Heart left ventricle (tissue), 16 donors: ENCODE measurements at regions of chr21 and their contacts with region 1.

Region 1: GRCh38 chr21:40841524-40842202 is 5.3 kb downstream of the DSCAM start:
- DNase-seq: peak in 4 of 5 donors; percentile 29 to 65 (median 43)
- ATAC-seq: peak in 3 of 4 donors; percentile 86 to 89 (median 88)
- H3K4me3 ChIP-seq: peak overlapping the region in 8 of 12 donors; percentile 18 to 34 (median 24)
- H3K27ac ChIP-seq: no peak overlapping the region
- H3K4me1 ChIP-seq: peaks cover 0 to 12% (median 0%) of the 10 kb centered on the region in 12 donors
- H3K27me3 ChIP-seq: peaks cover 4 to 84% (median 32%) of the 10 kb centered on the region in 9 donors
- CTCF ChIP-seq: peak in 11 of 12 donors; percentile 17 to 55 (median 31)
- POLR2A ChIP-seq: no peak

Region 2: GRCh38 chr21:40466893-40467501 is 374.7 kb before region 1 on chr21:
- intact Hi-C with region 1: loop called in 4 of 10 experiments (anchors 2 to 5 kb)
- DNase-seq: no peak
- ATAC-seq: no peak
- H3K4me3 ChIP-seq: no peak overlapping the region
- H3K27ac ChIP-seq: no peak overlapping the region
- H3K4me1 ChIP-seq: no peaks in the 10 kb centered on the region
- H3K27me3 ChIP-seq: peaks cover 0 to 12% (median 0%) of the 10 kb centered on the region in 9 donors
- CTCF ChIP-seq: peak in 11 of 12 donors; percentile 20 to 53 (median 42)
- POLR2A ChIP-seq: no peak

Region 3: GRCh38 chr21:40658316-40658715 is 183.3 kb before region 1 on chr21:
- intact Hi-C with region 1: no loop called
- DNase-seq: no peak
- ATAC-seq: no peak
- H3K4me3 ChIP-seq: no peak overlapping the region
- H3K27ac ChIP-seq: no peak overlapping the region
- H3K4me1 ChIP-seq: no peaks in the 10 kb centered on the region
- H3K27me3 ChIP-seq: peaks cover 0 to 4% (median 0%) of the 10 kb centered on the region in 9 donors
- CTCF ChIP-seq: no peak
- POLR2A ChIP-seq: no peak

Region 4: GRCh38 chr21:41045534-41046268 is 204.0 kb after region 1 on chr21:
- intact Hi-C with region 1: loop called in 1 of 10 experiments (anchors 10 kb)
- DNase-seq: no peak
- ATAC-seq: peak in 3 of 4 donors; percentile 20 to 56 (median 41)
- H3K4me3 ChIP-seq: no peak overlapping the region
- H3K27ac ChIP-seq: no peak overlapping the region
- H3K4me1 ChIP-seq: no peaks in the 10 kb centered on the region
- H3K27me3 ChIP-seq: peaks cover 0 to 16% (median 0%) of the 10 kb centered on the region in 9 donors
- CTCF ChIP-seq: peak in 11 of 12 donors; percentile 17 to 41 (median 33)
- POLR2A ChIP-seq: no peak

Region 5: GRCh38 chr21:41068967-41069642 is 227.4 kb after region 1 on chr21:
- intact Hi-C with region 1: loop called in 2 of 10 experiments (anchors 5 to 10 kb)
- DNase-seq: peak; percentile 75 to 92 (median 87)
- ATAC-seq: peak; percentile 59 to 90 (median 86)
- H3K4me3 ChIP-seq: peak overlapping the region in 10 of 12 donors; percentile 18 to 46 (median 40)
- H3K27ac ChIP-seq: no peak overlapping the region
- H3K4me1 ChIP-seq: peaks cover 0 to 10% (median 6%) of the 10 kb centered on the region in 12 donors
- H3K27me3 ChIP-seq: peaks cover 0 to 24% (median 7%) of the 10 kb centered on the region in 9 donors
- CTCF ChIP-seq: peak; percentile 77 to 95 (median 90)
- POLR2A ChIP-seq: no peak

Region 6: GRCh38 chr21:41217671-41218660 is 376.3 kb after region 1 on chr21:
- intact Hi-C with region 1: no loop called
- DNase-seq: peak; percentile 45 to 69 (median 64)
- ATAC-seq: peak; percentile 39 to 92 (median 84)
- H3K4me3 ChIP-seq: peak overlapping the region in 1 of 12 donors; percentile 19
- H3K27ac ChIP-seq: peak overlapping the region in 5 of 12 donors; percentile 18 to 59 (median 46)
- H3K4me1 ChIP-seq: peaks cover 0 to 14% (median 0%) of the 10 kb centered on the region in 12 donors
- H3K27me3 ChIP-seq: no peaks in the 10 kb centered on the region
- CTCF ChIP-seq: no peak
- POLR2A ChIP-seq: no peak